Transverse colon (tissue), 4 donors: ENCODE measurements at regions of chr21 and their contacts with region 1.

Region 1: DNA sequence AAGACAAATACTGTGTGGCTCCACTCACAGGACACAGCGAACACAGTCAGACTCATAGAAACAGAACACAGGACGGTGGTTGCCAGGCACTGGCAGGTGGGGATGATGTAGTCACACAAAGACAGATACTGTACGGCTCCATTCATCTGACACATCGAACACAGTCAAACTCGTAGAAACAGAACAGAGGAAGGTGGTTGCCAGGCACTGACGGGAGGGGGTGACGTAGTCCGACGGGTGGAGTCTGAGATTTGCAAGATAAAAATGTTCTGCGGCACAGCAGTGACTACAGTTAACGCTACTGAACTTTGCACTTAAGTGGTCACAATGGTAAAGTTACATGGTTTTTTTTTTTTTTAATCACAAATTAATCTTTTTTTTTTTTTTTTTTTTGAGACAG is 18.7 kb downstream of the C21orf58 start:
- DNase-seq: no peak
- H3K4me3 ChIP-seq: no peak overlapping the region
- H3K27ac ChIP-seq: no peak overlapping the region
- H3K4me1 ChIP-seq: no peaks in the 10 kb centered on the region
- H3K27me3 ChIP-seq: no peaks in the 10 kb centered on the region
- CTCF ChIP-seq: no peak
- EP300 ChIP-seq: no peak
- POLR2A ChIP-seq: no peak

Region 2: DNA sequence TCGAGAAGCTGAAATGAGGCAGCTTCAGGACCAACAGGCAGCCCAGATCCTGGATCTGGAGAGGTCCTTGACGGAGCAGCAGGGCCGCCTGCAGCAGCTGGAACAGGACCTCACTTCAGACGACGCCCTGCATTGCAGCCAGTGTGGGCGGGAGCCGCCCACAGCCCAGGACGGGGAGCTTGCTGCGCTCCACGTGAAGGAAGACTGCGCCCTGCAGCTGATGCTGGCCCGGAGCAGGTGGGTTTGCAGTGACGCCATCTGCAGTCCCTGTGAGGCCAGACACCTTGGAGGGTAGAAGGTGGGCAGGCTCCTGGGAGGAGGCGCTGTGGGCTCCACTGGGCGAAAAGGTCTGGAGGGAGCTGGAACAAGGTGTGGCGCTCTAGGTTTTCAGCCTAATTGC is 58.7 kb after region 1 on chr21:
- in situ Hi-C with region 1: no loop called
- intact Hi-C with region 1: loop called (anchors 2 kb)
- DNase-seq: no peak
- H3K4me3 ChIP-seq: no peak overlapping the region
- H3K27ac ChIP-seq: no peak overlapping the region
- H3K4me1 ChIP-seq: peaks cover 0 to 2% (median 0%) of the 10 kb centered on the region in 4 donors
- H3K27me3 ChIP-seq: no peaks in the 10 kb centered on the region
- CTCF ChIP-seq: no peak
- EP300 ChIP-seq: no peak
- POLR2A ChIP-seq: no peak